ENCODE measurements at regions of chr2 and their contacts with region 1.

Region 1: DNA sequence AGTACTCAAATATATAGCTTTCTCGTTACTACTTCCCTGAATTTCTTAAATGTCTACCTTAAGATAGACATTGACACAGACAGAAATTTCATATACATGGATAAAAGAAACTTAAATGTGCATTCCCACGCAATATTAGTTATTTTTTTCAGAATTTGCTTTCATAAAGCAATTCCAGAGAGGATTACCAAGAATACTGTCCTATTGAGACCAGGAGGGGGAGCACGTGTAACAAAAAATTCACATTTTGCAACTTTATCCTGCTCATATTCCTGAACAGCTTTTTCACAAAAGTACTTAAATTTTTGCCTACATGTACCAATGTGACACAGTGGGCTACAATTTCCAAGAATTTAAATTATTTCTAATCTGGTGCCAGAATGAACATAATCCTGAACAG is 30.7 kb upstream of the ERCC3 start:
- DNase-seq: no peak
- H3K4me3 ChIP-seq: no peak overlapping the region
- H3K27ac ChIP-seq: no peak overlapping the region
- H3K4me1 ChIP-seq: no peaks in the 10 kb centered on the region
- H3K27me3 ChIP-seq: no peaks in the 10 kb centered on the region
- CTCF ChIP-seq: peak; percentile 63

Region 2: DNA sequence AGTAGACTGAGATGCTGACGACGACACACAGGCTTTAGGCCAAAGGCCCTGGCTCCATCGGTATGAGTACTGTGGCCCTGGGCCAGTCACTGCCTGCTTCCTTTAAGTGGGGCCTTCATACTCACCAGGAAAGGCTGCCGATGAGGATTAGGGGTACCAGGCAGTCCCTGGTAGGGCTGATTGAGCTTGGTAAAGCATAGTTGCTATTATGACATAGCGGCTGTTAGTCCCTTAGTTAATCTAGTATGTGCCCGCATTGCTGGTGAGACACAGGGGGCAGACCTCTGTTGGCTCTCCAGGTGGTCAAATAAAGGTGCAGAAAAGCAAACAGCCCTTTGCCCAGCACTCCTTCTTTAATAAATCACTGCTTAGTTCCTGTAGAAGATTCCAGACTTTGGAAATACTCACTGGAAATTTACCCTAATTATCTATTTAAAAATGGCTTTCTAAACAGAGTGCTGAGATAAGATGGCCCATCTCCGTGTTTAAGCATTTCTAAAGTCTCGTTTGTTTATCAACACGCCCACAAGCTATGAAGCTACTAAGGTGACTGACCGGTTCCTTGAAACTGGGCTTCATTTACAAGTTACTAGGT is 209.1 kb before region 1 on chr2:
- intact Hi-C with region 1: no loop called
- DNase-seq: no peak
- H3K4me3 ChIP-seq: no peak overlapping the region
- H3K27ac ChIP-seq: no peak overlapping the region
- H3K4me1 ChIP-seq: no peaks in the 10 kb centered on the region
- H3K27me3 ChIP-seq: peaks cover 32% of the 10 kb centered on the region
- CTCF ChIP-seq: no peak

Region 3: GRCh38 chr2:127408004-127408806 is 83.6 kb after region 1 on chr2:
- intact Hi-C with region 1: no loop called
- DNase-seq: peak; percentile 92
- H3K4me3 ChIP-seq: peak overlapping the region; percentile 73
- H3K27ac ChIP-seq: peak overlapping the region; percentile 92
- H3K4me1 ChIP-seq: peaks cover 56% of the 10 kb centered on the region
- H3K27me3 ChIP-seq: no peaks in the 10 kb centered on the region
- CTCF ChIP-seq: peak; percentile 18

Region 4: GRCh38 chr2:127479219-127479825 is 154.7 kb after region 1 on chr2:
- intact Hi-C with region 1: loop called (anchors 5 kb)
- DNase-seq: no peak
- H3K4me3 ChIP-seq: no peak overlapping the region
- H3K27ac ChIP-seq: no peak overlapping the region
- H3K4me1 ChIP-seq: no peaks in the 10 kb centered on the region
- H3K27me3 ChIP-seq: no peaks in the 10 kb centered on the region
- CTCF ChIP-seq: peak; percentile 70